CD4-positive, alpha-beta memory T cell (primary cell): ENCODE measurements at regions of chr9 and their contacts with region 1.

Region 1: DNA sequence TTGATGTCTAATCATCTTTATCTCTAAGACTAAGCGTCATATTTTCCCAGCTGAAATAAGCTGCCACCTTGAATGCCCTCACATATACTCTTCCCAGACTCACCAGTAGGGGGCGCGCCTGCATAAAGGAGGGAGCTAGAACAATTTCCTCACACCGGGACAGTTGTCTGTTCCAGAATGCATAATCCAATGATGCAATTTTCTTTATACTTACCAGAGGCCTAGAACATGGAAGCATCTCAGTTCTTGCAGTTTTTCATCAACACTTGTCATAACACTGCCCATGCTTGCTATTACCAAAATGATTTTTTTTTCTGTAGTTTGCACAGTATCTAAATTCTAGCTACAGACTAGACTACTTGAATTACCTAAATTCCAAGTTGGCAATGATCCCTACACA is 203.9 kb downstream of the FRMD3 start:
- DNase-seq: peak; percentile 39 to 48 (median 43)
- H3K4me3 ChIP-seq: no peak overlapping the region
- H3K4me3 Mint-ChIP-seq: no peak overlapping the region
- H3K27ac ChIP-seq: no peak overlapping the region
- H3K27ac Mint-ChIP-seq: no peak overlapping the region
- H3K4me1 ChIP-seq: no peaks in the 10 kb centered on the region
- H3K4me1 Mint-ChIP-seq: peaks cover 0 to 5% (median 2%) of the 10 kb centered on the region in 4 donors
- H3K27me3 ChIP-seq: no peaks in the 10 kb centered on the region
- H3K27me3 Mint-ChIP-seq: no peaks in the 10 kb centered on the region

Region 2: GRCh38 chr9:83182071-83182470 is 152.2 kb before region 1 on chr9:
- CTCF ChIA-PET with region 1: no interaction called
- POLR2A ChIA-PET with region 1: no interaction called
- intact Hi-C with region 1: no loop called
- DNase-seq: no peak
- H3K4me3 ChIP-seq: no peak overlapping the region
- H3K4me3 Mint-ChIP-seq: no peak overlapping the region
- H3K27ac ChIP-seq: no peak overlapping the region
- H3K27ac Mint-ChIP-seq: no peak overlapping the region
- H3K4me1 ChIP-seq: no peaks in the 10 kb centered on the region
- H3K4me1 Mint-ChIP-seq: no peaks in the 10 kb centered on the region
- H3K27me3 ChIP-seq: no peaks in the 10 kb centered on the region
- H3K27me3 Mint-ChIP-seq: peaks cover 2 to 5% of the 10 kb centered on the region in 2 donors

Region 3: GRCh38 chr9:83304686-83305085 is 29.6 kb before region 1 on chr9:
- CTCF ChIA-PET with region 1: interaction called, 11 read pairs
- POLR2A ChIA-PET with region 1: no interaction called
- intact Hi-C with region 1: no loop called
- DNase-seq: no peak
- H3K4me3 ChIP-seq: no peak overlapping the region
- H3K4me3 Mint-ChIP-seq: no peak overlapping the region
- H3K27ac ChIP-seq: no peak overlapping the region
- H3K27ac Mint-ChIP-seq: no peak overlapping the region
- H3K4me1 ChIP-seq: no peaks in the 10 kb centered on the region
- H3K4me1 Mint-ChIP-seq: no peaks in the 10 kb centered on the region
- H3K27me3 ChIP-seq: no peaks in the 10 kb centered on the region
- H3K27me3 Mint-ChIP-seq: no peaks in the 10 kb centered on the region

Region 4: DNA sequence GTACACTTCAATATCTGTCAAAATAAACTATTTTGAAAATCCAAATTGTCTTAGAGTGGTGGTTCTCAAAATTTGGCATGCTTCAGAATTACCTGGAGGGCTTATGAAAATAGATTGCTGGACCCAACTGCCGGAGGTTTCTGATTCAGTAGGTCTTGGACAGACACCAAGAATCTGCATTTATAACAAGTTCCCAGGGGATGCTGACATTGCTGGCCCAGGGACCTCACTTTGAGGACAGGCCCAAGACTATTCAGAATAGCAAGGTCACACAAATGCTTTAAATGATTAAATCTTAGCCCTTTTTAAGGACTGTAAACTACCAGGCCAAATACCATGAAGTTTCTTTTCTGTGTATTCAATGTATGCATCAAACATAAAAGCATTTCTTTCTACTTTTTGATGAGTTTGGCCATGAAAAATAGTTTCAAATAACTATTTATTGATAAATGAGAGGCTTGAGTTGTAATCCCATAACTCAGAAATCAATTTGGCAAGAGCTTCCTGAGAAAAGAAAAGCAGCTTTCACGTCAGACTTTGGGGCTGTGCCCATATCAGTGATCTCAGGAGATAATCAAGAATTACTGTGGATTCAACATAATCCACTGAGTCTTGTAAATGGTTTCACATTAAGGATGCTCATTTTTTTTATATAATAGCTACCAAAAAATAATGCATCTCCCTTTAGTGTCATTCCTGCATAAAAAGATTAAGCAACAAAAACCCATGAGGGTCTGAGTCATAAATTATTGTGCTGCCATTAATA is 12.5 kb after region 1 on chr9:
- CTCF ChIA-PET with region 1: interaction called, 13 read pairs
- POLR2A ChIA-PET with region 1: no interaction called
- intact Hi-C with region 1: no loop called
- DNase-seq: no peak
- H3K4me3 ChIP-seq: no peak overlapping the region
- H3K4me3 Mint-ChIP-seq: no peak overlapping the region
- H3K27ac ChIP-seq: no peak overlapping the region
- H3K27ac Mint-ChIP-seq: no peak overlapping the region
- H3K4me1 ChIP-seq: no peaks in the 10 kb centered on the region
- H3K4me1 Mint-ChIP-seq: no peaks in the 10 kb centered on the region
- H3K27me3 ChIP-seq: no peaks in the 10 kb centered on the region
- H3K27me3 Mint-ChIP-seq: no peaks in the 10 kb centered on the region

Region 5: GRCh38 chr9:83382421-83382820 is 48.1 kb after region 1 on chr9:
- CTCF ChIA-PET with region 1: no interaction called
- POLR2A ChIA-PET with region 1: no interaction called
- intact Hi-C with region 1: no loop called
- DNase-seq: no peak
- H3K4me3 ChIP-seq: no peak overlapping the region
- H3K4me3 Mint-ChIP-seq: no peak overlapping the region
- H3K27ac ChIP-seq: no peak overlapping the region
- H3K27ac Mint-ChIP-seq: no peak overlapping the region
- H3K4me1 ChIP-seq: no peaks in the 10 kb centered on the region
- H3K4me1 Mint-ChIP-seq: no peaks in the 10 kb centered on the region
- H3K27me3 ChIP-seq: no peaks in the 10 kb centered on the region
- H3K27me3 Mint-ChIP-seq: no peaks in the 10 kb centered on the region